Calu3 (cell line): ENCODE measurements at regions of chr2 and their contacts with region 1.

Region 1: GRCh38 chr2:18749912-18750526 is 160.7 kb upstream of the NT5C1B start:
- DNase-seq: peak; percentile 68
- H3K4me3 Mint-ChIP-seq: no peak overlapping the region
- H3K27ac Mint-ChIP-seq: no peak overlapping the region
- H3K4me1 Mint-ChIP-seq: no peaks in the 10 kb centered on the region
- H3K27me3 Mint-ChIP-seq: no peaks in the 10 kb centered on the region
- CTCF ChIP-seq: peak; percentile 42

Region 2: GRCh38 chr2:18520451-18521425 is 229.3 kb before region 1 on chr2:
- CTCF ChIA-PET with region 1: no interaction called
- intact Hi-C with region 1: loop called (anchors 2 kb)
- DNase-seq: peak; percentile 83
- H3K4me3 Mint-ChIP-seq: no peak overlapping the region
- H3K27ac Mint-ChIP-seq: no peak overlapping the region
- H3K4me1 Mint-ChIP-seq: peaks cover 10% of the 10 kb centered on the region
- H3K27me3 Mint-ChIP-seq: peaks cover 56% of the 10 kb centered on the region
- CTCF ChIP-seq: peak; percentile 89

Region 3: DNA sequence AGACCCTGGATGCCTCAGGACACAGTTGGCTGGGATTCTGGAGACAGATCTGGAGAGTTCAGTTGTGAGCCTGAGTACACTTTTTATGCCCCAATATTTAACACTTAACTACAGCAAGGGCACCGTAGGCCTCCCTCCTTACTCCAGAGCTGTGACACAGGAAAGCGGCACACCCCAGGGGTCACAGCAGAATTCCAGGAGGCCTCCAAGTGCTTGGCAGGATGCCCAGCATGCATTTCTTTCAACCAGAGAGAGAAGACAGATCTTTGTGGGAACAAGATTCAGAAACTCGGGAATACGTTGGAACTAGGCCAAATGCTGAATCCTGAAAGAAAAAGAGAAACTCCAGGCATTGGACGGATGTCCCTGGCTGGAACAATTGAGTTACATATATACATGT is 38.6 kb after region 1 on chr2:
- CTCF ChIA-PET with region 1: no interaction called
- intact Hi-C with region 1: no loop called
- DNase-seq: no peak
- H3K4me3 Mint-ChIP-seq: no peak overlapping the region
- H3K27ac Mint-ChIP-seq: no peak overlapping the region
- H3K4me1 Mint-ChIP-seq: no peaks in the 10 kb centered on the region
- H3K27me3 Mint-ChIP-seq: no peaks in the 10 kb centered on the region
- CTCF ChIP-seq: no peak

Region 4: GRCh38 chr2:18849841-18850578 is 100.0 kb after region 1 on chr2:
- CTCF ChIA-PET with region 1: no interaction called
- intact Hi-C with region 1: loop called (anchors 5 kb)
- DNase-seq: no peak
- H3K4me3 Mint-ChIP-seq: no peak overlapping the region
- H3K27ac Mint-ChIP-seq: no peak overlapping the region
- H3K4me1 Mint-ChIP-seq: no peaks in the 10 kb centered on the region
- H3K27me3 Mint-ChIP-seq: no peaks in the 10 kb centered on the region
- CTCF ChIP-seq: no peak

Region 5: DNA sequence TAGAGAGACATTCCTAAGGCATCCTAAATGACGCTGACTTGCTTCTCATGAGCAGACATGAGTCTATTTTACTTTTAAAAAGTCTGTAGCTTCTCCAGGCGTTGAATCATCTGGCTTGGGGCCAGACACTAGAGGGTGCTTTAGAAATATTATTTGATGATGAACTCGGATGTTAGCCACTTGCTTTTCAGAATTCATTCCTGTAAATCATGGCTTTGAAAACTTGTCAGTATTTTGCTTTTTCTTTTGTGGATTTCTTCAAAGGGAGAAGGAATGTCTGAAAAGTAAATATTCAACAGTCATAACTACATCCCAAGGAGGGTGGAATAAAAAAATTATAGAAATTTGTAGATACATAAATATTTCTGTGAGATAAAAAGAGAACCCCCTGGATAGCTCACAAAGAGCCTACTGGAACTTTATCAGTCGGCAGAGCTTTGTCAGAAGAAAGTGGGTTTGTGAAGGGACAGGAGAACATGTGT is 237.6 kb after region 1 on chr2:
- CTCF ChIA-PET with region 1: no interaction called
- intact Hi-C with region 1: loop called (anchors 5 kb)
- DNase-seq: peak; percentile 64
- H3K4me3 Mint-ChIP-seq: no peak overlapping the region
- H3K27ac Mint-ChIP-seq: no peak overlapping the region
- H3K4me1 Mint-ChIP-seq: peaks cover 14% of the 10 kb centered on the region
- H3K27me3 Mint-ChIP-seq: no peaks in the 10 kb centered on the region
- CTCF ChIP-seq: no peak

Region 6: DNA sequence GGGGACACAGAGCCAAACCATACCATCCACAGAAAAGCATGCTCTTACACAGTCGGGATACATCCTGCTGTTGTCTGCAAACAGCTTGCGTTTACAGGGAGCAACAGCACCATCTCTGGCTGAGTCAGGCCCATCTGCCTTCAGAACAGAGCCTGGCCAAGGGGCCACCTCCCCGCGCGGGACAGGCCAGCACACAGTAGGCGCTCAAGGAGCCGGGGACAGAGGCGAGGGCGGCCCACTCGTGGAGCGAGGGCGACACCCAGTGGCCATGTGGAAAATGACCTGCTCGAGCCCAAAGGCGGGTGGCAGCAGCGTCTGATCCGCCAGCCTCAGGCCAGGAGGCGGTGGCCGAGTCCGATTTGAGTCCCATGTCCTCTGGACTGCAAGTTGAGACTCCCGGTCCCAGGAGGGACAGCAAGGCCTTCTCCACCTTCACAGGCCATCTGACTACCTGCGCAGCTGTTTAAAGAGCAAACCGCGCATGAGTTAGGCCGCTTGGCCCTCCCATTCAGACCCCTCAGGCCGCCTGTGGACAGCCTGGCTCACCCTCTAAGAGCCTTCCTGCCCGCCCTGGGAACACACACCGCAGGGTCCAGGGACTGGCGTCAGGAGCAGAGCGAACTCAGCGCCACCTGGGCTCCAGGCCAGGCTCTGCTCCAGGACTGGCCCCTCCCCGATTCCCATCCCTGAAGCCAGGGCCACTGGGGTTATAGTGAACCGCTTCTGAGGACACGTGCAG is 1113.5 kb after region 1 on chr2:
- CTCF ChIA-PET with region 1: no interaction called
- intact Hi-C with region 1: loop called (anchors 1 kb)
- DNase-seq: peak; percentile 84
- H3K4me3 Mint-ChIP-seq: no peak overlapping the region
- H3K27ac Mint-ChIP-seq: no peak overlapping the region
- H3K4me1 Mint-ChIP-seq: no peaks in the 10 kb centered on the region
- H3K27me3 Mint-ChIP-seq: peaks cover 16% of the 10 kb centered on the region
- CTCF ChIP-seq: peak; percentile 98